Adrenal gland (tissue), 19 donors: ENCODE measurements at regions of chr9 and their contacts with region 1.

Region 1: DNA sequence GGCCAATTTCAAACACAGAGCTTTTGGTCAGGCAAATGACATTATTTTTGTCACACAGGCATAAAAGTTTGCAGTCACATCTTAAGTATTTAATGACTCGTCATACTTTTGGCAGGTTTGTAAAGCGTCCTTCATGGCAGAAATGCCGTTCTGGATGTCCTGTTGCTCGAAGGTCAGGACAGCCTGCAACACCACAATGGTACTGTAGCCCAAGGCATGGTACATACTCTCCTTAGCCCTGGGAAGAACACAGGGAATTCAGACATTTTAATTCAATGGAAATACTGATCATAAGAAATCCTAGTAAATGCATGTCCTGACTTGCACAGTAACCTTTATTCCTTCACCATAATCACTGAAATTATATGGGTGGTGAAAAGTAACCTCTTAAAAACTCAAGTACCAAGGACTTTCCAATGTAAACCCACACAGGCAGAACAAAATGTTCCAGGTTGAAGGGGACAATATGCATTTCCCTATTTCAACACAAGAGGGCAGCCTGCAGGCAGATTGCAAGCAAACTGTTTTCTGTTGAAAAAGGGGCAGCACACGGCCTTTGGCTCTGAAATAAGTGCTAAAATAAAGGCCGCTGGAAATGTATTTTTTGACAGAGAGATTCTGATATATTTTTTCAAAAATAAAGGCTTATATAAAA is 95.7 kb downstream of the TTC39B start:
- DNase-seq: peak; percentile 52 to 83 (median 71)
- H3K4me3 ChIP-seq: no peak overlapping the region
- H3K27ac ChIP-seq: peak overlapping the region in 1 of 5 donors; percentile 24
- H3K4me1 ChIP-seq: peaks cover 0 to 10% of the 10 kb centered on the region in 2 donors
- H3K27me3 ChIP-seq: no peaks in the 10 kb centered on the region
- CTCF ChIP-seq: peak; percentile 78 to 88 (median 84)
- POLR2A ChIP-seq: no peak

Region 2: GRCh38 chr9:15416880-15417279 is 205.6 kb after region 1 on chr9:
- intact Hi-C with region 1: loop called in 1 of 2 experiments (anchors 5 kb)
- DNase-seq: peak in 3 of 7 donors; percentile 23 to 45 (median 38)
- H3K4me3 ChIP-seq: no peak overlapping the region
- H3K27ac ChIP-seq: no peak overlapping the region
- H3K4me1 ChIP-seq: peaks cover 0 to under 1% of the 10 kb centered on the region in 2 donors
- H3K27me3 ChIP-seq: no peaks in the 10 kb centered on the region
- CTCF ChIP-seq: peak in 5 of 6 experiments; percentile 8 to 45 (median 37)
- POLR2A ChIP-seq: no peak

Region 3: DNA sequence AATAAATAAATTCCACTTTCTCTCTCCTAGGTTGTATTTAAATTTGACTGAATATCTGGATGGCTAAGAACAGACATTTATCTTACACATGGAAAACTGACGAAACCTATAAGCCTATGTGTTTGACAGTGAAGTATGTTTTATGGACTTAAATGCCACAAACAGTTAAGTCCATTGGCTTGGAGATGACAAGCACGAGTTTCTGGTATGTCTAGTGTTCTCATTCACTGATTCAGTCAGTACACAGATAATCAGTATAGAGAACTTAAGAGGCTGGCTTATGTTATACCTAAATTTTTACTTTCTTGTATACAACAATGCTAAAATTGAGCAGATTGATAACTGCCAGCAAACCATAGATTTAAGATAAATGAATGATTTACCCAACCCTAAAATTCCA is 250.3 kb after region 1 on chr9:
- intact Hi-C with region 1: no loop called
- DNase-seq: no peak
- H3K4me3 ChIP-seq: no peak overlapping the region
- H3K27ac ChIP-seq: no peak overlapping the region
- H3K4me1 ChIP-seq: no peaks in the 10 kb centered on the region
- H3K27me3 ChIP-seq: no peaks in the 10 kb centered on the region
- CTCF ChIP-seq: no peak
- POLR2A ChIP-seq: no peak

Region 4: DNA sequence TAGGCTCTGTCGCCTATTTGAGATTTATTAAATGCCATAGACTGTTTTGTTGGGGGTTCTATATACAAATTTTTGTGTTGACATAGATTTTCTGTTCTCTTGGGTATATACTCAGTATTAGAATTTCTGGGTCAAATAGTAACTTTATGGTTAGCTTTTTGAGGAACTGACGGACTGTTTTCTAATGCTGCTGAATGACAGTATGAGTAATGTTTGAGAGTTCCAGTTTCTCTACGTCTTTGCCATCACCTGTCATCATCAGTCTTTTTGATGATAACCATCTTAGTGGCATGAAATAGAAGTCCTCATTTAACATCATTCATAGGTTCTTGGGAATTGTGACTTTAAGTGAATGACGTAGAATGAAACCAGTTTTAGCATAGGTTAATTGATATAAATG is 401.7 kb after region 1 on chr9:
- intact Hi-C with region 1: loop called in 1 of 2 experiments (anchors 5 kb)
- DNase-seq: no peak
- H3K4me3 ChIP-seq: no peak overlapping the region
- H3K27ac ChIP-seq: no peak overlapping the region
- H3K4me1 ChIP-seq: no peaks in the 10 kb centered on the region
- H3K27me3 ChIP-seq: no peaks in the 10 kb centered on the region
- CTCF ChIP-seq: no peak
- POLR2A ChIP-seq: no peak